PC-3 (cell line): ENCODE measurements at regions of chr11 and their contacts with region 1.

Region 1: DNA sequence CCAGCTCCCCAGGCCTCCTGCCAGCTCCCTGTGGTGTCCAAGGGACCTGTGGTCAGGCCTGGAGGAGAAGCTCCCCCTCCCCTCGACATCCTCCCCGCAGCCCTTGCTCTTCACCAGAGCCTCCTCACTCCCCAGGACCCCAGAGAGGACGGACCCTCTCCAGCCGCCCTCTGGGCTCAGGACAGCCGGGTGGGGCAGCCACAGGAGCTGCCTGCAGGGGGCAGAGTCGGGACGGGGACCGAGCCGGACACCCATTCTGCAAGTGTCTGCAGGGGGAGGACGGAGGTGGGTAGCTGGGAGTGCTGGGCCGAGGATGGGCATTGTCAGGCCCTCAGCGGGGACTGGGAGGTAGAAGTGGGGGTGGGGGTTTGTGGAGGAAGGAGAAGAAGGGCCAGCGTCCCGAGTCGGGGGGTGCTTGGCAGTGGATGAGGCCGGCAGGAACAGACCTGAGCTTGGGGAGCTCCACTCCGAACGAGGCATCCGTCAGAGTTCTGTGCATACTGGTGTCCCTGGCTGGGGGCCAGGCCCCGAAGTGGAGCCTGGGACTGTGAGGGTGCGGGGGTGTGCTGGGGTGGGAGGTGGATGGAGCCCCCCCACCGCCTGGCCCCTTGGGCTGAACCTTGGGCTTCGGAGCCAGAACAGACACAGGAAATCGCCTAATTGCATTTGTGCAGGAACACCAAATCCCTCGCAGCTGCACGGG is 15.2 kb downstream of the PRR33 start:
- DNase-seq: peak; percentile 46
- ATAC-seq: 0 out of 2 replicates have a peak, but pooled peaks have one; percentile 24
- H3K4me3 ChIP-seq: no peak overlapping the region
- H3K27ac ChIP-seq: no peak overlapping the region
- H3K4me1 ChIP-seq: no peaks in the 10 kb centered on the region
- H3K27me3 ChIP-seq: no peaks in the 10 kb centered on the region
- CTCF ChIP-seq: peak; percentile 72

Region 2: GRCh38 chr11:1837171-1838076 is 39.1 kb before region 1 on chr11:
- CTCF ChIA-PET with region 1: interaction called, 10 read pairs
- POLR2A ChIA-PET with region 1: no interaction called
- intact Hi-C with region 1: no loop called
- DNase-seq: peak; percentile 33
- ATAC-seq: 0 out of 2 replicates have a peak, but pooled peaks have one; percentile 11
- H3K4me3 ChIP-seq: no peak overlapping the region
- H3K27ac ChIP-seq: no peak overlapping the region
- H3K4me1 ChIP-seq: peaks cover 24% of the 10 kb centered on the region
- H3K27me3 ChIP-seq: no peaks in the 10 kb centered on the region
- CTCF ChIP-seq: peak; percentile 75